ENCODE measurements at regions of chr16 and their contacts with region 1.

Region 1: DNA sequence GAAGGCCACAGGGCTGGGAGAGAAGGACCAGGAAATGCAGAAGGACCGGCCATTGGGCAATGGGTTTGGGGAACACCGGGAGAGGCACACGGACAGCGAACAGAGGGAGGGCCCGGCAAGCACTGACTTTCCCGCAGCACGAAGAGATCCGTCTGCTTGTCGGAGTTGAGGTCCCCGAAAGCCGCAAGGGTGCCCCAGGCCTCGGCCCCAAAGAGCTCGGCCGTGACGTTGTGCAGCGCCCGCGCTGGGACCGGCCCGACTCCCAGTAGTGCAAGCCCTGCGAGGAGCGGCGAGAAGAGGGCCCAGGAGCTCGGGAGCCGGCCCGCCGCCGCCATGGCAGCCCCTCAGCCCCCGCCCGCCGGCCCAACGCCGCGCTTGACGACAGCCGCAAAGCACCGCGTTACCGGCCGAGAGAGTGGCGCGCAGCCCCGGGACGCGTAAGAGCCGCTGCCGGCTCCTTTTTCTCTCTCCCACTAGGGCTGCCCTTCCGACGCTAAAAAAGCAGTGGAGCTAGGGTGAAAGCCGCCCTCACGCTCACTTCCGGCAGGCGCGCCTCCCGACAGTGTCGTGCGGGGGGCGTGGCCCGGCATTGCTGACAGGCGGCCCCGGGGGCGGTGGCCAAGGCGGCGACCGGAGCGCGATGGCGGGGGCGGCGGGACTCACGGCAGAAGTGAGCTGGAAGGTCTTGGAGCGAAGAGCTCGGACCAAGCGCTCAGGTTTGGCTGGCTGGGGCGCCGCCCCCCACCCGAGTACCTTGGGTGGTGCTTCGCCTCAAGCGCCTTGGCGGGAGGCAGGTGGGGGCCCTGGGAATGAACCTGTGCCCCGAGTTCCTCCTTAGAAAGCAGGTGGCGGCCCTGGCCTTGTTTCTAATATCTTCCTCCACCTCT is at the starts of genes ITFG1 and PHKB:
- DNase-seq: peak; percentile 95
- H3K4me3 Mint-ChIP-seq: peak within 1 kb of the TSS; percentile 90
- H3K27ac Mint-ChIP-seq: peak within 1 kb of the TSS; percentile 97
- H3K4me1 Mint-ChIP-seq: peaks cover 51% of the 10 kb centered on the region
- H3K27me3 Mint-ChIP-seq: no peaks in the 10 kb centered on the region
- total RNA-seq, gene ITFG1: 25.4 and 27.6 TPM in 2 replicates
- total RNA-seq, gene PHKB: 24.4 and 26.6 TPM in 2 replicates

Region 2: DNA sequence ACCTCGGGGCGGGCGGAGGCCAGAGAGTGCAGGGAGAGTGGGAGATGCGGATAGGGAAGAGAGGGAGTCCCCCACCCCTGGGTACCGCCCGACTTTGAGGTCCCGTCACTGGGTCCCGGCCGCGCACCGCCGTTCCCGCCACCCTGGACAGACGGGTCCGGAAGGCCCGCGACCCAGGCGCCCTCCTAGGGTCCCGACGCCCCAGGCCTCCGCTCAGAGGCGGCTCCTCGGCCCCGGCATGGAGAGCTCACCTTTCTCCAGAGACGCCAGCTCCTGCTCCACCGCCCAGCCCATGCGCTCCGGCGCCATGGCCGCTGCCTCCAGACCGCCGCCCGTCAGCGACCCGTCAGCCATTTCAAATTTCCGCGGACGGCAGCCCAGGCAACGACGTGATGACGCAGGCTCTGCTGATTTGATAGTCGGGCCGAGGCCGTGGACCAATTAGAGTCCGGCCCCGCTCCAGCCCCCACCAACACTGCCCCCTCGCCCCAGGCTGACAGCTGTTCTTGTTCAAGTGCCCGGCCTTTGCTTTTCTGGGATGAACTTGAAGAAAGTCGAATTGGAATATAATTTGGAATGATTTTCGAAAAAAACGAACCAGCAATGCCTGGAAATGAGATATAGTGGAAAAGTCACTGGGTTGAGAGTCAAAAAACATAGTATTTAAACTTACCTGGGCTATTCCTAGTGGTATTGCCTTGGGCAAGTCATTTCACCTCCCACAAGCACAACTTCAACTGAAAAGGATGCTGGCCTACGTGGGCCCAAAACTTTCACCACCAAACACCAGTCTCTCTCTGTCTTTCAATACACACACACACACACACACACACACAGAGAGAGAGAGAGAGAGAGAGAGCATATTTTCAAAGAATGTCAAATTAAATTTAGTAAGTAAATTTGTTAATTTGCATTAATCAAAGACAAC is 839.7 kb before region 1 on chr16 and contains the start of gene SHCBP1:
- intact Hi-C with region 1: loop called (anchors 1 kb)
- DNase-seq: peak; percentile 80
- H3K4me3 Mint-ChIP-seq: peak within 1 kb of the TSS; percentile 97
- H3K27ac Mint-ChIP-seq: peak within 1 kb of the TSS; percentile 97
- H3K4me1 Mint-ChIP-seq: peaks cover 39% of the 10 kb centered on the region
- H3K27me3 Mint-ChIP-seq: no peaks in the 10 kb centered on the region
- total RNA-seq, gene SHCBP1: 46.5 and 46.8 TPM in 2 replicates

Region 3: GRCh38 chr16:46947900-46948547 is 512.9 kb before region 1 on chr16:
- intact Hi-C with region 1: loop called (anchors 10 kb)
- DNase-seq: peak; percentile 19
- H3K4me3 Mint-ChIP-seq: no peak overlapping the region
- H3K27ac Mint-ChIP-seq: no peak overlapping the region
- H3K4me1 Mint-ChIP-seq: peaks cover 9% of the 10 kb centered on the region
- H3K27me3 Mint-ChIP-seq: peaks cover 2% of the 10 kb centered on the region

Region 4: GRCh38 chr16:47448830-47449575 is 12.0 kb before region 1 on chr16:
- intact Hi-C with region 1: no loop called
- DNase-seq: no peak
- H3K4me3 Mint-ChIP-seq: no peak overlapping the region
- H3K27ac Mint-ChIP-seq: no peak overlapping the region
- H3K4me1 Mint-ChIP-seq: no peaks in the 10 kb centered on the region
- H3K27me3 Mint-ChIP-seq: no peaks in the 10 kb centered on the region

Region 5: GRCh38 chr16:47574091-47575054 is 113.4 kb after region 1 on chr16:
- intact Hi-C with region 1: loop called (anchors 1 kb)
- DNase-seq: no peak
- H3K4me3 Mint-ChIP-seq: peak overlapping the region; percentile 5
- H3K27ac Mint-ChIP-seq: peak overlapping the region; percentile 45
- H3K4me1 Mint-ChIP-seq: peaks cover 55% of the 10 kb centered on the region
- H3K27me3 Mint-ChIP-seq: no peaks in the 10 kb centered on the region

Region 6: DNA sequence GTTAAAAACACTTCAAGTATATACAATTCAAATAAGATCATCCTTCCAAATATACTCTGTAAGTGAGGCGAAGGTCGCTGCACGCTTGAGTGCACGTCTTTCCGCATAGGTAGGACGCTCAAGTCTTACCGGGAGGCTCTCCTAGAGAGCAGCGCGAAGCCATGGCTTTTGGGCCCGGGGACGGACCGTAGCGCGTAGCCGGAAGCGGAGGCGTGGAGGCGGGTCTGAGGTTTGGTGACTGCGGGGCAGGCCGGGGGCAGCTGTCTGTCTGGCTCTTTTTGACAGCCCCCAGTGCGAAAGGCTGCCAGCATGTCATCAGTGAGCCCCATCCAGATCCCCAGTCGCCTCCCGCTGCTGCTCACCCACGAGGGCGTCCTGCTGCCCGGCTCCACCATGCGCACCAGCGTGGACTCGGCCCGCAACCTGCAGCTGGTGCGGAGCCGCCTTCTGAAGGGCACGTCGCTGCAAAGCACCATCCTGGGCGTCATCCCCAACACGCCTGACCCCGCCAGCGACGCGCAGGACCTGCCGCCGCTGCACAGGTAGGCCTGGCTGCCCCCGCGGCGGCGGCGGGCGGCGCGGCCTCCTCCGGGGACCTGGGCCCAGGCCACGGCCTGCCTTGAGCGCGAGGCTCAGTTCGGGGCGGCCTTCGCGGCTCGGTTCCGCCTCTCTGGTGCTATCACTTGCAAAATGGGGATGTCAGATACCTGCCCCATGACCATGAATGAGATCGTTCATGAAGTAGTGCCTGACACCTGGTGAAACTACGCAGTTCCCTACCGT is 783.3 kb after region 1 on chr16 and contains the start of gene LONP2:
- intact Hi-C with region 1: loop called (anchors 5 kb)
- DNase-seq: peak; percentile 90
- H3K4me3 Mint-ChIP-seq: peak within 1 kb of the TSS; percentile 92
- H3K27ac Mint-ChIP-seq: peak within 1 kb of the TSS; percentile 93
- H3K4me1 Mint-ChIP-seq: peaks cover 27% of the 10 kb centered on the region
- H3K27me3 Mint-ChIP-seq: peaks cover 2% of the 10 kb centered on the region
- total RNA-seq, gene LONP2: 52.2 and 55.7 TPM in 2 replicates

Measured in activated T-helper 1 cell treated with anti-CD3 and anti-CD28 coated beads, Interleukin-12 subunit alpha, Interleukin-12 subunit beta, Interleukin-2, Interleukin-4 antibody, amounts not matched to agents 30 ng/mL and 10 ng/mL and 1 ng/mL, durations not matched to agents 14 hours and 24 hours and 36 hours (primary cell).